ENCODE measurements at regions of chr5 and their contacts with region 1.

Region 1: DNA sequence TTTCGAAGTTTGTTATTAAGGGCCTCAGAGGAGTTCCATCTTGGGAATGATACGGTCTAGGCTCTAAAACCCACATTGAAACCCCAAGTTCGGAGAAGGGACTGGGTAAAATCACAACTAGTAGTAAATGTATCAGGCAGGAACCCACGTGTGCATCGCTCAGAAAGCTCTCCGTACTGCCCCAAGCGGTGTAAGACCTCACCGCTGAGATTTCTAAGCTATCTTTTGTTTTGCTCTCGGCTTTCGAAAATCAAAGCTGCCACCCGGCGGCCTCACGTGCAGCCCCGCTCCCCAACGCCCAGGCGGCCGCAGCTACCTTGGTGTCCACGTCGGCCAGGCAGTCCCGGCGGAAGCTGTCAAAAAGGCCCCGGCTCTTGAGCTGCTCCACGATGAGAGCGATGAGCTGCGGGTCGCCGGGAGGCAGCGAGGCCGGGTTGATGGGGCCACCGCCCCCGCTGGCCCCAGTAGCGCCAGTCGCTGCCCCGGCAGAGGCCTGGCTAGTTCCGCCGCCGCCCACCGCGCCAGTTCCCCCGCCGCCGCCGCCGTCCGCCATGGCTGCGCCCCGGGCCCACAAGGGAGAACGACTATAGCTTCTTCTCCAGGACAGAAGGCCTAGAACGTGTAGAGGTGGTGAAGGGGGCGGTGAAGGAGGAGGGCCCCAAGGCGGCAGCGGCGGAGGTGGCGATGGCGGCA is 420 bp downstream of the BOD1 start:
- DNase-seq: peak; percentile 72 to 80
- ATAC-seq: peak; percentile 79 to 80
- H3K4me3 ChIP-seq: peak overlapping the region; percentile 88
- H3K27ac ChIP-seq: peak overlapping the region; percentile 92 to 98
- H3K4me1 ChIP-seq: peaks cover 40% of the 10 kb centered on the region
- CTCF ChIP-seq: peak; percentile 53
- EP300 ChIP-seq: no peak
- POLR2A ChIP-seq: no peak; the same call in 1 of the 2 replicates
- RAD21 ChIP-seq: peak in 1 of 2 experiments; percentile 37; a peak in 3 of 5 replicates

Region 2: GRCh38 chr5:173315495-173316350 is 300.3 kb before region 1 on chr5:
- CTCF ChIA-PET with region 1: interaction called, 13 read pairs
- POLR2A ChIA-PET with region 1: interaction called, 5 read pairs
- DNase-seq: no peak
- ATAC-seq: no peak
- H3K4me3 ChIP-seq: no peak overlapping the region
- H3K27ac ChIP-seq: no peak overlapping the region
- H3K4me1 ChIP-seq: no peaks in the 10 kb centered on the region
- CTCF ChIP-seq: no peak
- EP300 ChIP-seq: no peak
- POLR2A ChIP-seq: no peak
- RAD21 ChIP-seq: no peak

Region 3: DNA sequence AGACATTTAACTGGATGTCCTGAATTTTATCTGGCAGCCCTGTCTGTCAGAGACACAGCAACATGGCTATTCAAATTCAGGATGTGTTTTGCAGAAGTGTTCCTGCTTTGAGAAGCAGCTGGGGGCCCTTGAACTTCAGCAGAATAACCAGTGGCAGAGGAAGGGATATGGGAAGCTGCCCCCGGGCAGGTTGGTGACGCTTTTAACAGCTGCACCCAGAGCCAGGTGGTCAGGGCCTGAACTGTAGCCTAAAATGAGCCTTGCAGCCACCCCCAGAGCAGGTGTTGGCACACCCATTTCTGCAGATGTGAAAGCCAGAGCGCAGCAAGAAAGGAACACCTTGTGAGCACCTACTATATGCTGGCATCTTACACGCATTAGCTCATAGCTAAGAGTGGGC is 129.1 kb after region 1 on chr5:
- CTCF ChIA-PET with region 1: no interaction called
- POLR2A ChIA-PET with region 1: no interaction called
- DNase-seq: no peak
- ATAC-seq: no peak
- H3K4me3 ChIP-seq: no peak overlapping the region
- H3K27ac ChIP-seq: peak overlapping the region; percentile 61 to 69; a peak in 4 of 6 replicates
- H3K4me1 ChIP-seq: peaks cover 16% of the 10 kb centered on the region
- CTCF ChIP-seq: no peak
- EP300 ChIP-seq: no peak
- POLR2A ChIP-seq: no peak
- RAD21 ChIP-seq: no peak

Region 4: GRCh38 chr5:173925448-173926071 is 309.5 kb after region 1 on chr5:
- CTCF ChIA-PET with region 1: interaction called, 11 read pairs
- POLR2A ChIA-PET with region 1: no interaction called
- DNase-seq: peak; percentile 25 to 69
- ATAC-seq: peak in 1 of 2 experiments; percentile 64; a peak in 3 of 6 replicates
- H3K4me3 ChIP-seq: no peak overlapping the region
- H3K27ac ChIP-seq: peak overlapping the region; percentile 23 to 67; a peak in 3 of 6 replicates
- H3K4me1 ChIP-seq: peaks cover 61% of the 10 kb centered on the region
- CTCF ChIP-seq: peak; percentile 56
- EP300 ChIP-seq: no peak
- POLR2A ChIP-seq: no peak
- RAD21 ChIP-seq: peak; percentile 48 to 58

Region 5: DNA sequence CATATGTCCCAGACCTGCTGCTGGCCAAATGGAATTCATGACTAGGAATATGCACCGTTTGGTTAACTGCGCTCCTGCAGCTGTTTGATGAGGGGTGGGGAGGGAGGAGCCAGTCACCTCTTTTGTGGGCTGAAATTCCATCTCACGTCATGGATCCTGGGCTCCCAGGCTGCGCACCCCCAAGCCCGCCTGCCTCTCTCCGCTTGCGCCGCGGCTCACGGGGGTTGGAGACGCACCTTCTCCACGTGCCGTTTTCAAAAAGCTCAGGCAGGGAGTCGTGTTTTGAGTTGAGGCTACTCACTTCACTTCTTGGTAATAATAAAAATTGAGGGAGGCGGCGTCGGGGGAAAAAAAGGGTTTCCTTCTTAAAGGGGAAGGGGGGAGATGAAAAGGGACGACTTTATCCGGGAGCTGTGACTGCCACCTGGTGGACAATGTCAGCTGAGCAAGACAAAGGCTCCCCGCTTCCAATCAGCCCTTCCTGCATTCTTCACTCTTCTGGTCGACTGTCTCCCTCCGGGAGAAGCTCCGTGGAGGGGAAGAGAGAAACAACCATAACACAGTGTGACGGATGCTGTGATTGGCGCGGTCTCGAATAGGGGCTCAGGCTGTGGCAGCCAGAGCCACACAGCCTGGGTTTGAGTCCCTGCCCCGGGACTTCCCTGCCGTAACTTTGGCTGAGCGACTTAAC is 357.0 kb after region 1 on chr5:
- CTCF ChIA-PET with region 1: interaction called, 229 read pairs
- POLR2A ChIA-PET with region 1: interaction called, 12 read pairs
- DNase-seq: peak; percentile 83 to 86
- ATAC-seq: peak; percentile 55 to 72
- H3K4me3 ChIP-seq: peak overlapping the region; percentile 35; the same call in 2 of the 3 replicates
- H3K27ac ChIP-seq: peak overlapping the region; percentile 96 to 97
- H3K4me1 ChIP-seq: peaks cover 53% of the 10 kb centered on the region
- CTCF ChIP-seq: peak; percentile 94
- EP300 ChIP-seq: no peak
- POLR2A ChIP-seq: no peak
- RAD21 ChIP-seq: peak; percentile 97 to 99

Region 6: DNA sequence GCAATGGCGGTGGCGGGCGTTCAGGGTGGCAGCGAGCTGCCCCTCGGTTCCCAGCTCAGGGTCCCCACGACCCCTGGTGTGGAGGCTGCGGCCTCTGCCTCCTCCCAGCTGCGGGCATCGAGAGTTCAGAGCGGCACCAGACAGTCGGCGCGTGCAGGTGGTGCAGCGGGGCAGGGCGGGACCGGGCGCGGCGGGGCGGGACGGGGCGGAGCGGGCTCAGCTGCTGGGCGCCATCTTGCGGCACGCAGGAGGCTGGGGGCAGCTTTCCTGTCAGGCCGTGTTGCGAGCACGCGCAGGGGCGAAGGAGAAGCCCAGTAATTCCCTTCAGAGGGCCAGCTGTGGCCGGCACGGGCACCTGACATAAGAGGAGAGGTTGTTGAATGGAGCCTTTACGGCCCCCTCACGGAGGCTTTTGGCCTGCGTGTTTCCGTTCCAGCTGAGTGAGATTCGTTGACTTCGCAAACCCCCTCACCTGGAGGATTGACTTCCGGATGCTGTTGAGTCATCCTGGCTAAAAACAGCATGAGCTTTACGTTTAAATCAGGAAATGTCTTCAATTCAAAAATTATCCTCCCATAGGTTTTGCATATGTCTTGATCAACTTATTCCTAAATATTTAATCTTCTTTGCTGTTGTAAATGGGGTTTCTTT is 373.5 kb after region 1 on chr5:
- CTCF ChIA-PET with region 1: interaction called, 12 read pairs
- POLR2A ChIA-PET with region 1: no interaction called
- DNase-seq: no peak
- ATAC-seq: no peak
- H3K4me3 ChIP-seq: no peak overlapping the region
- H3K27ac ChIP-seq: no peak overlapping the region
- H3K4me1 ChIP-seq: no peaks in the 10 kb centered on the region
- CTCF ChIP-seq: no peak
- EP300 ChIP-seq: no peak
- POLR2A ChIP-seq: no peak
- RAD21 ChIP-seq: no peak

Region 7: DNA sequence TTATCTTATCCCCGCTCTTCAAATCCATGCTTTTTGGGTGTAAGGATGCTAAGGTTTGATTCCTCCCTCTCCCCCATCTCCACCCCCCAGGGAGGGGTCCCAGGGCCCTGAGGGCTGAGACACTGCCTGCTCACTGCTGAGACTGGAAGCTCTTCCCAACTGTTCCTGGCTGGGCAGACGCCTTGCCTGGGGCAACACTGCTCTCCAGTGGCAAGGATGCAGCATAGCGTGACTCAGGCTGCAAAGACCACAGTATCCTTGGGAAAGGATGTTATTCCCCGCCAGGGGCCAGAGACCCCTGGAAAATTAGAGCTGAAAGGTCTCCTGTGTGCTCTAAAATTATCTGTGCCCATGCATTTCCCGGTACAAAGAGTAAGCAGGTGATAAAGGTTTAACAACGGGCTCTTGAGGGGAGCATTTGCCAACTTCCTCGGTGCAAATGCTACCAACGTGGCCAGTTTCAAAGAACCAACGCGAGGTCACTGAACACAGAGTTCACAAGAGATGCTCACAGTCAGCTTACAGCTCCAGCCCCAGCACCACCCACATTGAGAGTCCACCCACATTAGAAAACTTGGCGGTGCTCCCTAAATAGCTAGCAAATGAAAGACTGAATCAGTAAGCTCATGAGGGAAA is 701.3 kb after region 1 on chr5:
- CTCF ChIA-PET with region 1: interaction called, 29 read pairs
- POLR2A ChIA-PET with region 1: no interaction called
- DNase-seq: peak; percentile 60 to 68
- ATAC-seq: peak; percentile 83 to 98
- H3K4me3 ChIP-seq: no peak overlapping the region
- H3K27ac ChIP-seq: no peak overlapping the region
- H3K4me1 ChIP-seq: no peaks in the 10 kb centered on the region
- CTCF ChIP-seq: peak; percentile 79
- EP300 ChIP-seq: no peak
- POLR2A ChIP-seq: no peak
- RAD21 ChIP-seq: peak; percentile 94 to 95